ENCODE measurements at regions of chr22 and their contacts with region 1.

Region 1: DNA sequence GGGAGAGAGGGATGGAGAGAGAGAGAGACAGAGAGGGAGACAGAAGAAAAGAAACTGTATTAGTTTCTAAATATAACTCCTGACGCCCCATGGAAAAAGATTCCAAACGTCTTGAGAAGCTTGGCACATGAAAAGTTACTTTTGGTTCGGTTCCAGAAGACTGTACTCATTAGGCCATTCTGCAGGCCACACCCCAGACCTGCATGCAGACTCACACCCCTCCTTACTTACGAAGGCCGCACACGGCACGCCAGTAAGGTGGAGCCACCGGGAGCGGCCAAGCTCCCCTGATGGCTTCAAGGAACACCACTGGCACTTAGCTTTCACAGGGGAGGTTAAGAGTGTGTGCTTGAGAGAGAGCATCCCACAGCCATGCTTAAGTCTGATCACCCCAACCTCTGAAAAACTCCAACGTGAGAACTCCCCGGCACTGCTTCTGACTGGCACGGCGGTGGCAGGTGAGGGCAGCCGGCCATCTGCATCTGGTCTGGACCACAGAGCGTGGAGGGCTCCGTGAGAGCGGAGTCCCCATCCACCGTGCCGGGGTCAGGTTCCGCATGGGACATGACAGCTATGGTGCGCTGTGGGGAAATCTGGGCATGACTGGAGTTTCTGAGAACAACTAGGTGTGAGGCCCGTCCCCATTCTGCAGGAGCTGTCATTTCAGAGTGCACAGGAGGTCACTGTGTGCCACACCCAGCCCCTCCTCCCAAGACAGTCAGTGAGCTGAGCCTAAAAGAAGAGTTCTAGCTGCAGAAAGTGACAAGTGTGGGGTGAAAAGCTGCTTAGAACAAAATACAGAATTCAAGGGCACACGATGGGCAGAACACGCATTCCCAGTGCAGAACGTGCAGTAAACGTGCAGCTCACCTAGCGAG is 62.4 kb downstream of the MYH9 start:
- DNase-seq: peak; percentile 98
- H3K4me3 Mint-ChIP-seq: peak overlapping the region; percentile 26
- H3K27ac Mint-ChIP-seq: peak overlapping the region; percentile 68
- H3K4me1 Mint-ChIP-seq: peaks cover 51% of the 10 kb centered on the region
- H3K27me3 Mint-ChIP-seq: no peaks in the 10 kb centered on the region
- CTCF ChIP-seq: no peak

Region 2: GRCh38 chr22:36097880-36098279 is 227.5 kb before region 1 on chr22:
- CTCF ChIA-PET with region 1: no interaction called
- POLR2A ChIA-PET with region 1: no interaction called
- intact Hi-C with region 1: no loop called
- DNase-seq: peak; percentile 37
- H3K4me3 Mint-ChIP-seq: no peak overlapping the region
- H3K27ac Mint-ChIP-seq: no peak overlapping the region
- H3K4me1 Mint-ChIP-seq: peaks cover 6% of the 10 kb centered on the region
- H3K27me3 Mint-ChIP-seq: no peaks in the 10 kb centered on the region
- CTCF ChIP-seq: no peak

Region 3: DNA sequence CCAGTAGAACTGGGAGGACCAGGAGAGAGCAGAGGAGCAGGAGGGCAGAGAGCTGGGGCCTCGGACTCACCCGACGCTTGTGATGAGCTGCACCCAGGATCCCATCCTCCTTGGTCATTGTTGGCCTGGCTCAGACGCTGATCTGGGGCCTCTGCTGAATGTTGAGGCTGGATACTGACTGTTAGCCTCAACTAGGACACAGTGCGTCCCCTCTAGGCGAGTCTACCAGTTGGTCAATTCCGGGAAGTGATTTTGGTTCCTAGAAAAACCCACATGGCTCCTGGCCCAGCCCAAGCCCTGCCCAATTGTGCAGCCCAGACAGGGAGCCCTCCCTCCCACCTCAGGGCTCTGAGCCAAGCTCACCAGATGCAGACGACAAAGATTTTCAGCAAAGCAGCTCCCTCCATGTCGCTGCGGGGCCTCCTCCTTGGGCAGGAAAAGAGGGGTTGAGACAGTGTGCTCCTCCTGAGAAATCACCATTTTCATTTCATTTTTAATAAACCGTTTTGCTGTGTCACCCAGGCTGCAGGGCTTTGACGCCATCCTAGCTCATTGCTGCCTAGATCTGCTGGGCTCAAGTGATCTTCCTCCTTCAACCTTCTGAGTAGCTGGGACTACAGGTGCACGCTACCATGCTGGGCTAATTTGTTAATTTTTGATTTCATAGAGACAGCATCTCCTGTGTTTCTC is 123.6 kb before region 1 on chr22 and contains the start of gene APOL4:
- CTCF ChIA-PET with region 1: no interaction called
- POLR2A ChIA-PET with region 1: no interaction called
- intact Hi-C with region 1: no loop called
- DNase-seq: peak; percentile 32
- H3K4me3 Mint-ChIP-seq: no peak within 1 kb of the TSS
- H3K27ac Mint-ChIP-seq: no peak within 1 kb of the TSS
- H3K4me1 Mint-ChIP-seq: no peaks in the 10 kb centered on the region
- H3K27me3 Mint-ChIP-seq: peaks cover 19% of the 10 kb centered on the region
- CTCF ChIP-seq: no peak
- total RNA-seq, gene APOL4: not detected in 2 replicates

Region 4: GRCh38 chr22:36301384-36301828 is 24.0 kb before region 1 on chr22:
- CTCF ChIA-PET with region 1: interaction called, 62 read pairs
- POLR2A ChIA-PET with region 1: interaction called, 4 read pairs
- intact Hi-C with region 1: no loop called
- DNase-seq: peak; percentile 73
- H3K4me3 Mint-ChIP-seq: no peak overlapping the region
- H3K27ac Mint-ChIP-seq: no peak overlapping the region
- H3K4me1 Mint-ChIP-seq: peaks cover 7% of the 10 kb centered on the region
- H3K27me3 Mint-ChIP-seq: no peaks in the 10 kb centered on the region
- CTCF ChIP-seq: peak; percentile 94

Region 5: GRCh38 chr22:36352803-36353507 is 27.6 kb after region 1 on chr22:
- CTCF ChIA-PET with region 1: interaction called, 7 read pairs
- POLR2A ChIA-PET with region 1: interaction called, 17 read pairs
- intact Hi-C with region 1: no loop called
- DNase-seq: peak; percentile 83
- H3K4me3 Mint-ChIP-seq: peak overlapping the region; percentile 55
- H3K27ac Mint-ChIP-seq: peak overlapping the region; percentile 83
- H3K4me1 Mint-ChIP-seq: peaks cover 64% of the 10 kb centered on the region
- H3K27me3 Mint-ChIP-seq: no peaks in the 10 kb centered on the region
- CTCF ChIP-seq: no peak

Region 6: GRCh38 chr22:36369922-36370791 is 44.8 kb after region 1 on chr22:
- CTCF ChIA-PET with region 1: interaction called, 5 read pairs
- POLR2A ChIA-PET with region 1: interaction called, 27 read pairs
- intact Hi-C with region 1: loop called (anchors 2 kb)
- DNase-seq: peak; percentile 82
- H3K4me3 Mint-ChIP-seq: peak overlapping the region; percentile 54
- H3K27ac Mint-ChIP-seq: peak overlapping the region; percentile 79
- H3K4me1 Mint-ChIP-seq: peaks cover 64% of the 10 kb centered on the region
- H3K27me3 Mint-ChIP-seq: no peaks in the 10 kb centered on the region
- CTCF ChIP-seq: no peak

Region 7: DNA sequence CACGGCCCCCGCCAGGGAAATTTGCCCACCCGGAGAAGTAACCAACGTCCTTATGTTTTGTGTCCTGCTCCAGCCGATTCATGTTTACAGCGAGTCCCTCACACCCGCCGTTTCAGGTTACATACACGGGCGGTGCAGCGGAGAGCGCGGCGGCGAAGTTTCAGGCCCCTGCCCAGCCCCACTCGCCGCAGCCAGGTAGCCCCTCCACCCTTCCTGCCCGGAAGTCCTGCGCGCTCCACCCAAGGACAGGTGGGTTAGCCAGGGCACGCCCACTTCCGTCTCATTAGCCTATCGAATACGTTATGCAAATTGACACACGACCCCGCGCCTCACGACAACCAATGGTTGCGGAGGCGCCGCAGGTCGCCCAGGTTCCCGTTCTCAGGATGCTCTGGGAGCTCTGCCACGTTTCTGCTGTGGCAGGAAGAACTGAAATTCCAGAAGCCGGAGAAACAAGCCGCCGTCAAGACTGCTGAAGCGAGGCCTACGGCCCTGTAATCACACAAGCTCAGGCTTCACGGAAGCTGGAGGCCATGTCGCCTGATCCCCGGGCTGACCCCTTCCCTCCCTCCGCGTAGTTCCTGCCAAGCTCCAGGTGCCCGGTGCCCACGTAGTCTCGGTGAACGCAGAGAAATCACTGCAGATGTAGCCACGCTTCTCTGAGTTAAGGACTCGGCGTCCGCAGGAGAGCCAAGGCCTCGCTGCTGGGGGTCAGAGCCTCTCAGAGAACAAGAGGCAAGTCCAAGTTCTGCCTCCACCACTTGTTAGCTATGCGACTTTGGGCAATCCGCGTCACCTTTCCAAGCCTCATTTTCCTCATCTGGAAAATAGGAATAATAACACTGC is 84.7 kb after region 1 on chr22:
- CTCF ChIA-PET with region 1: no interaction called
- POLR2A ChIA-PET with region 1: interaction called, 14 read pairs
- intact Hi-C with region 1: no loop called
- DNase-seq: peak; percentile 97
- H3K4me3 Mint-ChIP-seq: peak overlapping the region; percentile 78
- H3K27ac Mint-ChIP-seq: peak overlapping the region; percentile 85
- H3K4me1 Mint-ChIP-seq: peaks cover 26% of the 10 kb centered on the region
- H3K27me3 Mint-ChIP-seq: no peaks in the 10 kb centered on the region
- CTCF ChIP-seq: no peak

Region 8: GRCh38 chr22:36470162-36470993 is 145.0 kb after region 1 on chr22:
- CTCF ChIA-PET with region 1: interaction called, 19 read pairs
- POLR2A ChIA-PET with region 1: interaction called, 56 read pairs
- intact Hi-C with region 1: loop called (anchors 2 kb)
- DNase-seq: peak; percentile 85
- H3K4me3 Mint-ChIP-seq: no peak overlapping the region
- H3K27ac Mint-ChIP-seq: peak overlapping the region; percentile 51
- H3K4me1 Mint-ChIP-seq: peaks cover 48% of the 10 kb centered on the region
- H3K27me3 Mint-ChIP-seq: no peaks in the 10 kb centered on the region
- CTCF ChIP-seq: peak; percentile 91

Region 9: GRCh38 chr22:36481393-36482168 is 156.2 kb after region 1 on chr22 and contains the start of gene TXN2:
- CTCF ChIA-PET with region 1: interaction called, 4 read pairs
- POLR2A ChIA-PET with region 1: interaction called, 10 read pairs
- intact Hi-C with region 1: no loop called
- DNase-seq: peak; percentile 97
- H3K4me3 Mint-ChIP-seq: peak within 1 kb of the TSS; percentile 96
- H3K27ac Mint-ChIP-seq: peak within 1 kb of the TSS; percentile 91
- H3K4me1 Mint-ChIP-seq: peaks cover 10% of the 10 kb centered on the region
- H3K27me3 Mint-ChIP-seq: no peaks in the 10 kb centered on the region
- CTCF ChIP-seq: no peak
- total RNA-seq, gene TXN2: 61.5 and 83.2 TPM in 2 replicates

Region 10: GRCh38 chr22:36497910-36498665 is 172.7 kb after region 1 on chr22:
- CTCF ChIA-PET with region 1: no interaction called
- POLR2A ChIA-PET with region 1: no interaction called
- intact Hi-C with region 1: no loop called
- DNase-seq: no peak
- H3K4me3 Mint-ChIP-seq: no peak overlapping the region
- H3K27ac Mint-ChIP-seq: no peak overlapping the region
- H3K4me1 Mint-ChIP-seq: no peaks in the 10 kb centered on the region
- H3K27me3 Mint-ChIP-seq: no peaks in the 10 kb centered on the region
- CTCF ChIP-seq: peak; percentile 7

Measured in MCF 10A (cell line).